OCI-LY7 (cell line): ENCODE measurements at regions of chr13 and their contacts with region 1.

Region 1: DNA sequence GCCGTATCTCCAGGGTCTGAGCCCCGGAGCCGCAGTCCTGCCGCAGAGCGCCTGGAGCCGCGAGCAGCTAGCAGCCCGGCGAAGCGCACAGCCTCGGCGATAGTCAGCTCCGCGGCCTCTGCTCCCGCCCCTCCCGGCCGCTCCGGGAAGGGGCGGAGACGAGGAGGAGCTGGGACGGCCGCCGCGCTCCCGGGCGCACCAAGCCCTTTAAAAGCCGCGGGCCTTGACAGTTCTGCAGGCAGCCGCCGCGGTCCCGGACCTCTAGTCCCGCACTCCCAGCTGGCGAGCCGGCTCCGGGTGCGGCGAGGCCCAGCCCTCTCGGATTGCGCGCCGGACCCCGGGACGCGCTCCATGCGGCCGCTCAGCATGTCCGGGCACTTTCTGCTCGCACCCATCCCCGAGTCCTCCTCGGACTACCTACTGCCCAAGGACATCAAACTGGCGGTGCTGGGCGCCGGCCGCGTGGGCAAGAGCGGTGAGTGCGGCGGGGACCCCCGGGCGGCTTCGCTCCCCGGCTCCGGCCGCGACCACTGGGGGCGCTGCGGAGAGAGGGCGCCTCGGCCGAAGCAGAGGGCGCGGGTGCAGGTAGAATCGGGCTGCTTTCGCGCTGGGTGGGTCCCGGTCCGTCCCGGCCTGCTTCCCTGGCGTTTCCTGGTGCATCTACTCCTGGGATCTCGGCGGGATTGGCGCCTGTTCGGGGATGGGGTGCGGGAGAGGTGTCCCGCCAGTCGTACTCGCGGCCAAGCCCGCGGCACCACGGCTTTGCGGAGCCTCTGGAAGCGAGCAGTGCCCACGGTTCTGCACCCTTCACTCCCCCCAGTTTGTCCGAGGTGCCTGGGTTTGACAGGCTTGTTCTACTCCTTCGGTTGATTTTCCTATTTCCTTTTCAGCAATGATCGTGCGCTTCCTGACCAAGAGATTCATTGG is at the start of gene RASL11A:
- DNase-seq: peak; percentile 71
- H3K4me3 ChIP-seq: peak within 1 kb of the TSS; percentile 80
- H3K27ac ChIP-seq: no peak within 1 kb of the TSS
- H3K4me1 ChIP-seq: peaks cover 16% of the 10 kb centered on the region
- CTCF ChIP-seq: peak; percentile 92
- total RNA-seq, gene RASL11A: 1.3 and 5.1 TPM in 2 replicates

Region 2: GRCh38 chr13:27251166-27252091 is 19.4 kb before region 1 on chr13 and contains the start of gene RPL21:
- CTCF ChIA-PET with region 1: no interaction called
- POLR2A ChIA-PET with region 1: no interaction called
- intact Hi-C with region 1: loop called (anchors 1 kb)
- DNase-seq: peak; percentile 97
- H3K4me3 ChIP-seq: peak within 1 kb of the TSS; percentile 99
- H3K27ac ChIP-seq: peak within 1 kb of the TSS; percentile 84
- H3K4me1 ChIP-seq: peaks cover 42% of the 10 kb centered on the region
- CTCF ChIP-seq: no peak
- total RNA-seq, gene RPL21: 1,266 and 1,706 TPM in 2 replicates

Region 3: GRCh38 chr13:27339299-27339698 is 68.4 kb after region 1 on chr13:
- CTCF ChIA-PET with region 1: no interaction called
- POLR2A ChIA-PET with region 1: no interaction called
- intact Hi-C with region 1: loop called (anchors 5 kb)
- DNase-seq: peak; percentile 78
- H3K4me3 ChIP-seq: no peak overlapping the region
- H3K27ac ChIP-seq: no peak overlapping the region
- H3K4me1 ChIP-seq: peaks cover 4% of the 10 kb centered on the region
- CTCF ChIP-seq: peak; percentile 67

Region 4: GRCh38 chr13:27504128-27504867 is 233.4 kb after region 1 on chr13:
- CTCF ChIA-PET with region 1: no interaction called
- POLR2A ChIA-PET with region 1: no interaction called
- intact Hi-C with region 1: no loop called
- DNase-seq: no peak
- H3K4me3 ChIP-seq: no peak overlapping the region
- H3K27ac ChIP-seq: no peak overlapping the region
- H3K4me1 ChIP-seq: no peaks in the 10 kb centered on the region
- CTCF ChIP-seq: no peak